Left cardiac atrium (tissue), 4 donors: ENCODE measurements at regions of chr15 and their contacts with region 1.

Region 1: DNA sequence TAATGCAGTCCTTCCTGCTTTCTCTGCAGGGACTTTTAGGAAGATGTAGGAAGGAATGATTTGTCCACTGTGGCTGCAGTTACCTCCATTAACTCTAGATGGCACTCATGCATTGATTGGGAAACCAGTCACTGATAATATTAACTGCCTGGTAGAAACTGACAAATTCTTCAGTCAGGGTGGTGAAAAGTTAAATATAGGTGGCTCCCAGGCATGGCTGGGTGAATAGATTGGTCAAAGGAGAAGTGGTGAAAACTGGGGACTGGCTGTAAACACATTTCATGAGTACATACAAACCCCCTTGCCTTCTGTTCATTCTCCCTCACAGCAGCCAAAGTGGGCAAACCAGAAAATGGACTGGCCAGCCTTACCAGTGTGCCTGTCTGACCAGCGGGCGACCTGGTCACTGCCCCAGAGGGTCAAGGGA is 333.4 kb downstream of the THSD4 start:
- DNase-seq: no peak
- ATAC-seq: peak; percentile 55 to 65

Region 2: DNA sequence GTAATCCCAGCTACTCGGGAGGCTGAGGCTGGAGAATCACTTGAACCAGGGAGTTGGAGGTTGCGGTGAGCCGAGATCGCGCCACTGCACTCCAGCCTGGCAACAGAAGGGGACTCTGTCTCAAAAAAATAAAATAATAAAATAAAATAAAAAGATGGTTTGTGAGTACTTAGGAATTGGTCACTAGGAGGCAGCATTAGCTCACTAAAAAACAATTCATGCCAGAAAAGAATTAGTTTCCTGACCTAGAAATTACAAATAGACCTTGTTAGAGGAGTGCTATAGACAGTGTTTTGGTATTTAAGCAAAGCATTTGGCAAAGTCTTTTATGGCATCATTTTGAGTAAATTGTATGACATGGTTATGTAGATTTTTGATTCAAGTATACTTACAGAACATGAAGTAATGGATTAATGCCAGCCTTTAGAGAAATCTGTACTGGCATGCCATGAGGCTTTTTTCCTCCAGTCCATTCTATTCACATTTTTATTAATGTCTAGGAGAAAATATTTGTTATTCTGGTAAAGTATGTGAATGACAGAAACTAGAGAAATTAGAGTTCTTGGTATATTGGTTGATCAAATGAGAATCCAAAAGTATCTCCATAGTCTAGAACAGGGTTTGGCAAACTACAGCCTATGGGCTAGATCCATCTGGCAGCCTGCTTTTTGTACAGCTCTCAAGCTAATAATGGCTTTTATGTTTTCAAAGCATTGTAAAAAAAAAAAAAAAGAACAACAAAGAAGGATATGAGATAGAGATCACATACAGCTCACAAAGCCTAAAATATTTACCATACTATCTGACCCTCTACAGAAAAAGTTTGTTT is 474.5 kb before region 1 on chr15:
- intact Hi-C with region 1: loop called in 1 of 2 experiments (anchors 10 kb)
- DNase-seq: no peak
- ATAC-seq: no peak

Region 3: GRCh38 chr15:71114896-71115554 is 333.7 kb before region 1 on chr15 and contains the start of gene THSD4:
- intact Hi-C with region 1: loop called in 1 of 2 experiments (anchors 10 kb)
- DNase-seq: peak; percentile 80
- ATAC-seq: peak; percentile 65 to 71
- total RNA-seq, gene THSD4: 39.8 to 68.3 TPM

Region 4: DNA sequence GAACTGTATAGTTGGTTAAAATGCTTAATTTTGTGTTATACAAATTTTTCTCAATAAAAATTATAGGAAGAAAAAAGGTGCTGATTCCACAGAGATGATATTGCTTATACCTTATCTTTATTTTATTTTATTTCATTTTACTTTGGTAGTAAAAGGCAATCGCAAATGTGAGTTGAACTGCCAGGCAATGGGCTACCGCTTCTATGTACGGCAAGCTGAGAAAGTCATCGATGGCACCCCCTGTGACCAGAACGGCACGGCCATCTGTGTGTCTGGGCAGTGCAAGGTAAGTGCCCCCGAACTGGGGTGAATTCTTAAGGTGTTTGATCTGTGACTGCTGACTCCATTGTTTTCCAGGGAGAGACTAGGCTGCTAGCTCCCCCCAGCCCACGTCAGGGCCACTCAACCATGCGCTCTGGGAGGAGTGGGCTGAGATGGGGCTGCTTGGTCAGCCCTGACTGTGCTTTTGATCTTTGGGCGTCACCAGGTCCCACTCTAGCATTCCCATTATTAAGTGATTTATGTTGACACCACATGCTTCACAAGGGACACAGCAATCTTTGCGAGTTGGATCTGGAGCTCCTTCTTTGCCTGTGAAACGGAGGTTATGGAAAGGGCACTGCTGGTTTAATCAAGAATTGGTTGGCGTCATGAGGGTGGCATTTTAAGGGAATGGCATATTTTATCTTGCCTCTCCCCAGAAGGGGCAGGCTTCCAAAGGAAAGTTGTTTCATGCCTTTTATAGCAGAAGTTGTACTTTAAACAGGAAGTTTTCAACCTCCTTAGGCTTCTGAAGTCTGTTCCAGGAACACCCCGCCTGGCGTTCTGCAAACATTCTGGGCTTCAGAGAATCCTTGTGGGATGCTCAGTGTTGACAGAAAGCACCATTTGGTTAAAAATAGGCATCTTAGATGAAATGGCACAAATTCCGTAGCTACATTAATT is 36.9 kb before region 1 on chr15:
- intact Hi-C with region 1: no loop called
- DNase-seq: peak; percentile 55
- ATAC-seq: peak; percentile 17 to 53

Region 5: DNA sequence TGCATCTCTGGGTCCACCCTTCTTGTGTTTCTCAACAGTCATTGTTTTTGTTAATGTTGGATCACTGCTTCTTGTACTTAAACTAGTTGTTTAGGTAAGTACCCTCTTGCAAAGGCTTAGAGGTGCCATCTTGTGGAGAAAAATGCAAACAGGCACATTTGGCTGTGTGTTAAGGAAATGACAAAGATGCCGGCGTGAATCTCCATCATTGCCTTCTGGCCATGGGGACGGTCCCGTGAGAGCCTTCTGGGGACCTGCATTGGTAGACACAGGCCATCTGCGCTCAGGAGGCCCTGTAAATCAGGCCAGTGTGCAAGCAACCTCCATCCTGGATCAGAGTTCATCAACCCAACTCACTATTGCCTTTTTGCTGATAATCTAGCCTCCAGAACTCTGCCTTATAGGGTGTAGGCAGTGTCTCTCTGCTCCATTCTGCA is 203.1 kb after region 1 on chr15:
- intact Hi-C with region 1: loop called in 1 of 2 experiments (anchors 10 kb)
- DNase-seq: no peak
- ATAC-seq: peak in 1 of 2 donors; percentile 51

Region 6: DNA sequence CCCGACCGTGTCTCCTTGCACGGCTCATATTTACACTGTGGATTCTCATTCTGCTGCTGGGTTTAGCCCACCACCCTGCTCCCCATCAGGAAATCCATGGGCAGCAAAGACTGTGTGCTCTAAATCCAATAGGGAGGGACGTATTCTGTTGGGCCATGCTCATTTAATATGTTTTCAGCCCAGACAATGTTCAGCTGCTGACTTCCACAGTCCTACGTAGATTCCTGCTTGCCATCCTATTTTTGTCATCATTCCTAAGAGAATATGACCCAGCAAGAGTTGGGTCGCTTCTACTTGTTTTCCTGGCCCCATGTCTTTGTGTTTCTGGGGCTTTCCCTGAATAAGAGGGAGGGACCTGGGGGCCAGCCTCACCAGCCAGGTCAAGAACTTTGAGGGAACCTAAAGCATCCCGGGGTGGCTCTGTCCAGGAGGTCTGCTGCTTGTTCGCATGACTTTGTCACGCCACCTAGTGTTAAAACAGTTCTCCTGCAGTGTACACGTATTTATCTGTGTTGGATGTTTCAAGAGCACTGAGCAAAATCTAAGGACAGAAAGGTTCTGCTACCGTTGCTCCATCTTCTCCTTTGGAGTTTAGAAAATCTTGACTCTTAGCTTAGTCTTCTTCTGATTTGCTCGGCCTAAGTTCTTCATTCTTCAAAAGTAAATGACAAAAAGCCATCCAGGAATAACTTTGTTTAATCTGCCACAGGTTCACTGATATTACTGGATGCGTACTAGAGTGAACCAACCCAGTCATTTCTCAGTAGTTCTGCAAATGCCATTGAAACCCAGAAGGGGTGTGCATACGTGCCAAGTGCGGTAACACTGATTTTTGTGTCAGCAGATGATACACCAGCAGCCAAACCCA is 281.8 kb after region 1 on chr15:
- intact Hi-C with region 1: loop called (anchors 2 to 10 kb)
- DNase-seq: peak; percentile 50
- ATAC-seq: peak; percentile 87 to 91

Region 7: GRCh38 chr15:71800835-71801745 is 352.4 kb after region 1 on chr15:
- intact Hi-C with region 1: loop called in 1 of 2 experiments (anchors 5 kb)
- DNase-seq: no peak
- ATAC-seq: peak; percentile 86 to 90